IMR-90 (cell line): ENCODE measurements at regions of chr9 and their contacts with region 1.

Region 1: DNA sequence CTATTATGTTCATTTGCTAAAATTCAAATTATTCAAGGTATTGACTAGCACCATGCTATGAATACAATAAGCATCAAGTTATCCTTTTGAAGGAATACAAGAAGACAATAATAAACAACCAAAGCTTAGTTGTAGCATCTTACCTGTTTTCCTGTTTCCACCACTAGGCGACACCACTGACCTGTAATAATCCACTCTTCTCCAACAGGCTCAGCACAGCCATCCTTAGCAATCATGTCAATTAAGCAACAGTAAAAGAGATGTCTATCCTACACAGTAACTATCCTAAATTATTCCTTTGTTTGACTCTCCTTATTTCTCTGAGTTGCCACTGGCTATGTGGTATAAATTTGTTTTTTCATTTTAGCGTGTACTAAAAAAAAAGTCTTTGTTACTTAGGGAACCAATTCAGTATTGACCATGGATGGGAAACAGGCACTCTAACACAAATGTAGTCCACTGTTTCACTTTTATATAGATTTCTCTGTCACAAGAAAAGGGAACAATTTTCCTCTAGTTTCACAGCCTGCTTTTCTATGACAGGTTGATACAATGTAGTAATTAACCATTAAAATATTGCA is 46.2 kb downstream of the PCA3 start:
- DNase-seq: peak; percentile 72
- ATAC-seq: peak; percentile 91
- H3K4me3 ChIP-seq: no peak overlapping the region
- H3K27ac ChIP-seq: no peak overlapping the region
- H3K4me1 ChIP-seq: no peaks in the 10 kb centered on the region
- H3K27me3 ChIP-seq: no peaks in the 10 kb centered on the region; the same call in 1 of the 2 replicates
- CTCF ChIP-seq: peak; percentile 86
- POLR2A ChIP-seq: no peak
- RAD21 ChIP-seq: peak; percentile 97

Region 2: GRCh38 chr9:76419782-76420380 is 390.6 kb before region 1 on chr9:
- CTCF ChIA-PET with region 1: no interaction called
- POLR2A ChIA-PET with region 1: no interaction called
- dilution Hi-C with region 1: no loop called
- in situ Hi-C with region 1: no loop called
- intact Hi-C with region 1: no loop called
- DNase-seq: no peak
- ATAC-seq: peak; percentile 63
- H3K4me3 ChIP-seq: no peak overlapping the region
- H3K27ac ChIP-seq: no peak overlapping the region
- H3K4me1 ChIP-seq: no peaks in the 10 kb centered on the region
- H3K27me3 ChIP-seq: no peaks in the 10 kb centered on the region
- CTCF ChIP-seq: peak; percentile 48
- POLR2A ChIP-seq: no peak
- RAD21 ChIP-seq: no peak; the same call in 1 of the 2 replicates

Region 3: DNA sequence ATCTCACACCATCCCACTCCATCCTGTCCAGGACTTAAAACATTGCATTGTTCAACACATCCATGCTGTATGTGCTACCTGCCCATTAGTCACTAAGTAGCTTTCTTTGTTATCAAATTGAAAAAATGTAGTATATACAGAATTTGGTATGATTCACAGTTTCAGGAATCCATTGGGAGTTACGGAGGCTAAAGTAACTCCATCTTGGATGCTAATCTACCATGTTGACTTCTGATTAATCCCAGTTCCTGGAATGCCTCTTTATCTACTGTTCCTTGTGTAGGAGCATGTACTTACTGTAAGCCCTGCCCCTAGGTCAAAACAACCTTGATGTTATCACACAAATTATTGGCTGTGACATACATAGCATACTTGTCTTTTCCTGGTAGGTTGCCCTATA is 170.1 kb after region 1 on chr9:
- CTCF ChIA-PET with region 1: interaction called, 5 read pairs
- POLR2A ChIA-PET with region 1: no interaction called
- dilution Hi-C with region 1: loop called (anchors 25 kb)
- in situ Hi-C with region 1: loop called (anchors 5 kb)
- intact Hi-C with region 1: no loop called
- DNase-seq: no peak
- ATAC-seq: no peak
- H3K4me3 ChIP-seq: no peak overlapping the region
- H3K27ac ChIP-seq: no peak overlapping the region
- H3K4me1 ChIP-seq: no peaks in the 10 kb centered on the region
- H3K27me3 ChIP-seq: peaks cover 6% of the 10 kb centered on the region
- CTCF ChIP-seq: no peak
- POLR2A ChIP-seq: no peak
- RAD21 ChIP-seq: no peak

Region 4: DNA sequence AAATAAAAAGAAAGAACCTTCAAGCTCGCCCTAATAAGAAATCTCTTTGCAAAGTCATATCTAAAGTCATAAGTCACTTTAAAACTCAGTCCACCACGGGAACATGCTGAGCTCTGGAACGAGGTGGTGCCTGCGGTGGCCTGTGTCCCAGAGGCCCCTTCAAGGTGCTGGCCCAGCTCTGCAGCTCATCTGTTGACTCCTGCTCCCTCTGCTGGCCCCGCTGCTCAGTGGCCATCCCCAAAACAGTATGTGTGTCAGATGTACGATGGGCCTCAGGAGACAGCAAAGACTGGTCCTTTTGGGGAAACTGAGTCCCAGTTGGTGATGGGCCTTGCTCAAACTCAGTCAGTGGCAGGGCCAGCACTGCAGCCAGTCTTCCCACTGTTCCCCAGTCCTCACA is 186.2 kb after region 1 on chr9:
- CTCF ChIA-PET with region 1: interaction called, 24 read pairs
- POLR2A ChIA-PET with region 1: no interaction called
- dilution Hi-C with region 1: loop called (anchors 25 kb)
- in situ Hi-C with region 1: no loop called
- intact Hi-C with region 1: loop called (anchors 2 kb)
- DNase-seq: peak; percentile 21
- ATAC-seq: peak; percentile 90
- H3K4me3 ChIP-seq: no peak overlapping the region
- H3K27ac ChIP-seq: no peak overlapping the region
- H3K4me1 ChIP-seq: no peaks in the 10 kb centered on the region
- H3K27me3 ChIP-seq: peaks cover 5% of the 10 kb centered on the region; the same call in 1 of the 2 replicates
- CTCF ChIP-seq: peak; percentile 49
- POLR2A ChIP-seq: no peak
- RAD21 ChIP-seq: peak; percentile 57

Region 5: GRCh38 chr9:77149879-77150278 is 339.4 kb after region 1 on chr9:
- CTCF ChIA-PET with region 1: no interaction called
- POLR2A ChIA-PET with region 1: no interaction called
- dilution Hi-C with region 1: no loop called
- in situ Hi-C with region 1: loop called (anchors 25 kb)
- intact Hi-C with region 1: loop called (anchors 1 kb)
- DNase-seq: no peak
- ATAC-seq: no peak
- H3K4me3 ChIP-seq: no peak overlapping the region
- H3K27ac ChIP-seq: no peak overlapping the region
- H3K4me1 ChIP-seq: no peaks in the 10 kb centered on the region
- H3K27me3 ChIP-seq: peaks cover 3% of the 10 kb centered on the region; the same call in 1 of the 2 replicates
- CTCF ChIP-seq: no peak
- POLR2A ChIP-seq: no peak
- RAD21 ChIP-seq: no peak